Activated T-helper 2 cell treated with anti-CD3 and anti-CD28 coated beads, Interferon-gamma antibody, Interleukin-2, Interleukin-4, amounts not matched to agents 10 μg/mL and 5 μg/mL and 100 μg/mL, durations not matched to agents 14 hours and 24 hours and 36 hours (primary cell): ENCODE measurements at regions of chrX and their contacts with region 1.

Region 1: GRCh38 chrX:72121383-72121782 is 10.3 kb downstream of the RTL5 start:
- DNase-seq: no peak
- H3K4me3 Mint-ChIP-seq: no peak overlapping the region
- H3K27ac Mint-ChIP-seq: no peak overlapping the region
- H3K4me1 Mint-ChIP-seq: peaks cover 19% of the 10 kb centered on the region
- H3K27me3 Mint-ChIP-seq: peaks cover 26% of the 10 kb centered on the region

Region 2: GRCh38 chrX:72100824-72101351 is 20.5 kb before region 1 on chrX:
- intact Hi-C with region 1: loop called (anchors 2 kb)
- DNase-seq: peak; percentile 71
- H3K4me3 Mint-ChIP-seq: no peak overlapping the region
- H3K27ac Mint-ChIP-seq: no peak overlapping the region
- H3K4me1 Mint-ChIP-seq: peaks cover 30% of the 10 kb centered on the region
- H3K27me3 Mint-ChIP-seq: peaks cover 46% of the 10 kb centered on the region